A549 (cell line): ENCODE measurements at regions of chr6 and their contacts with region 1.

Region 1: GRCh38 chr6:32952817-32953739 is at the start of gene HLA-DMA:
- DNase-seq: peak; percentile 49 to 93
- ATAC-seq: peak; percentile 88 to 99
- H3K4me3 ChIP-seq: no peak within 1 kb of the TSS
- H3K27ac ChIP-seq: no peak within 1 kb of the TSS
- H3K4me1 ChIP-seq: peaks cover 5% of the 10 kb centered on the region; the same call in 1 of the 3 replicates
- CTCF ChIP-seq: peak; percentile 50
- EP300 ChIP-seq: no peak
- POLR2A ChIP-seq: no peak
- RAD21 ChIP-seq: peak; percentile 24 to 28; a peak in 2 of 5 replicates
- polyA plus RNA-seq, gene HLA-DMA: 5.6 and 7.0 TPM in 2 replicates

Region 2: DNA sequence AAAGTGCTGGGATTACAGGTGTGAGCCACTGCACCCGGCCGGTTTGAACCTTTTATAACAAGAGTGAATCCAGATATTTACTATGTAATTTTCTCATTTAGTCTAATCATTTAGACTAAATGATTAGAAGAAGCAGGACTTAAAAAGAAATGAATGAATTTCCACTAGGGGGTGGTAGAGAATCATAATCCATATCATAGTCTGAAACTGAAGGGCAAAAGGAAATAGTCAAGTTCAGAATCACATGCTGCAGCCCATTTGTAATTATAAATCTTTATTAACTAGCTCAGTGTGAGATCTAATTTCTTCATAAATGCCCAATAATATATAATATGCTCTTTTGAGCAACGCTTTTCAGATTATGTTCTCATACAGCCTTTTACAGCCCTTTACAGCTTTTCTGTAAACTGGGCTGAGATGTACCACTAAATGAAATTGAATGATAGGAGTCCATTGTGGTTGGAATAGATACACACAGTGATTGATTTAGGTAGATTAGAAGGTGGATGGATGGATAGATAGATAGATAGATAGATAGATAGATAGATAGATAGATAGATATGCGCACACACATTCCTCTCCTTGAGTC is 67.3 kb before region 1 on chr6:
- CTCF ChIA-PET with region 1: interaction called, 28 read pairs
- POLR2A ChIA-PET with region 1: no interaction called
- DNase-seq: peak; percentile 39 to 66
- ATAC-seq: peak in 1 of 2 experiments; percentile 76; a peak in 3 of 6 replicates
- H3K4me3 ChIP-seq: no peak overlapping the region
- H3K27ac ChIP-seq: 0 out of 6 replicates have a peak overlapping the region, but pooled peaks of 1 of the 2 experiments have one; percentile 5
- H3K4me1 ChIP-seq: peaks cover 16% of the 10 kb centered on the region
- CTCF ChIP-seq: peak; percentile 66
- EP300 ChIP-seq: no peak
- POLR2A ChIP-seq: no peak
- RAD21 ChIP-seq: peak; percentile 80 to 82

Region 3: GRCh38 chr6:32933636-32934085 is 19.4 kb before region 1 on chr6:
- CTCF ChIA-PET with region 1: interaction called, 32 read pairs
- POLR2A ChIA-PET with region 1: no interaction called
- DNase-seq: peak; percentile 61 to 65
- ATAC-seq: peak; percentile 66 to 78; a peak in 4 of 6 replicates
- H3K4me3 ChIP-seq: no peak overlapping the region
- H3K27ac ChIP-seq: no peak overlapping the region
- H3K4me1 ChIP-seq: no peaks in the 10 kb centered on the region
- CTCF ChIP-seq: peak; percentile 73
- EP300 ChIP-seq: no peak
- POLR2A ChIP-seq: no peak
- RAD21 ChIP-seq: peak; percentile 49 to 58; a peak in 4 of 5 replicates

Region 4: GRCh38 chr6:32964776-32965175 is 11.7 kb after region 1 on chr6:
- CTCF ChIA-PET with region 1: interaction called, 35 read pairs
- POLR2A ChIA-PET with region 1: no interaction called
- DNase-seq: no peak
- ATAC-seq: no peak
- H3K4me3 ChIP-seq: no peak overlapping the region
- H3K27ac ChIP-seq: no peak overlapping the region
- H3K4me1 ChIP-seq: peaks cover 17% of the 10 kb centered on the region
- CTCF ChIP-seq: no peak
- EP300 ChIP-seq: no peak
- POLR2A ChIP-seq: no peak
- RAD21 ChIP-seq: no peak